Panc1 (cell line): ENCODE measurements at regions of chr6 and their contacts with region 1.

Region 1: DNA sequence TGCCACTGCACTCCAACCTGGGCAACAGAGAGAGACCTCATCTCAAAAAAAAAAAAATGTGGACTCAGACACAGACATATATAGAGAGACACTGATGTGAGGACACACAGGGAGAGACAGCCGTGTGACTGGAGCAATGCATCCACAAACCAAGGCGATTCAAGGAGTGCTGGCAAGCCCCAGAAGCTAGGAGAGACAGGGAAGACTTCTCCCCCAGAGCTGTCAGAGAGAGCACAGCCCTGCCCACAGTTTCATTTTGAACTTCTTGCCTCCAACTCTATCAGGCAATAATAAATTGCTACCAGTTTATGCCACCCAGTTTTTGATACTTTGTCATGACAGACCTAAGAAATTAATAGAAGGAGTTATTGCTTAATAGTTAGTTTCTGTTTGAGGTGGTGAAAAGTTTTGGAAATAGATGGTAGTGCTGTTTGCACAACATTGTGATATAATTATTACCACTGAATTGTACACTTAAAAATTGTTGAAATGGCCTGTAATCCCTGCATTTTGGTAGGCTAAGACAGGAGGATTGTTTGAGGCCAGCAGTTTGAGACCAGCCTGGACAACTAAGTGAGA is 5.1 kb upstream of the MDFI start:
- DNase-seq: no peak
- ATAC-seq: no peak
- H3K4me3 ChIP-seq: no peak overlapping the region
- H3K27ac ChIP-seq: no peak overlapping the region
- H3K4me1 ChIP-seq: no peaks in the 10 kb centered on the region
- H3K27me3 ChIP-seq: no peaks in the 10 kb centered on the region; the same call in none of the 2 replicates
- CTCF ChIP-seq: no peak

Region 2: DNA sequence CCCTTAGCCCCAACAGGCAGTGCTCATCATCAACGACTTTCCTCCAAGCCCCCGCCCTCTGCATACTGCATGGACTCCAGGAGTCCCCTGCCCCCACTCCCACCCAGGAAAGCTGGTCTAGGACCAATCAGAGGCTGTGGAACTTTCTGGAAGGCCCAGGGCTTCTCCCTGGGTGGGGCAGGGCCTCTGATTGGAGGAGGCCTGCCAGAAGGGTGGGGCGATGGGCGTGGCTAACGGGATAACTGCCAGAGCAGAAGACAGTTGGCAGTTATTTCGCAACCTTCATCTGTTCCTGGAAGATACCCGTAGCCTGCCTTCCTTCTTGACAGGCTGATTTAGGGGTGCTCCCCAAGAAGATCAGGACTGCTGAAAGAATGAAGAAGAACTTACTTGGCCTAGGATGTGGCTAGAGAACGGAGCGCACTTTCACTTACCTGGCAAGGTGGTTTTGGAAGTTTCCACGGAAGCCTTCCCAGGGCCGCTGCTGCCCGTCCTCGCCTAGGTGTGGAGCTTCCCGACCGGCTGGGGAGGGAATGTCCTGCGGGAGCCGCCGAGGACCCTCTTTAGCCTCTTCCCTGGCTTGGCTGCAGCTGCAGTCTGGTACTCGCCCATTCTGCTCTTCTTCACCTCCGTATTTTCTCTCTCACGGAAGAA is 1254.9 kb before region 1 on chr6:
- CTCF ChIA-PET with region 1: no interaction called
- POLR2A ChIA-PET with region 1: no interaction called
- in situ Hi-C with region 1: no loop called
- intact Hi-C with region 1: no loop called
- DNase-seq: no peak
- ATAC-seq: no peak
- H3K4me3 ChIP-seq: no peak overlapping the region
- H3K27ac ChIP-seq: no peak overlapping the region
- H3K4me1 ChIP-seq: no peaks in the 10 kb centered on the region
- H3K27me3 ChIP-seq: no peaks in the 10 kb centered on the region
- CTCF ChIP-seq: no peak

Region 3: GRCh38 chr6:41591859-41592502 is 41.2 kb before region 1 on chr6:
- CTCF ChIA-PET with region 1: no interaction called
- POLR2A ChIA-PET with region 1: no interaction called
- in situ Hi-C with region 1: no loop called
- intact Hi-C with region 1: no loop called
- DNase-seq: peak; percentile 46
- ATAC-seq: peak; percentile 82
- H3K4me3 ChIP-seq: no peak overlapping the region
- H3K27ac ChIP-seq: no peak overlapping the region
- H3K4me1 ChIP-seq: no peaks in the 10 kb centered on the region
- H3K27me3 ChIP-seq: no peaks in the 10 kb centered on the region
- CTCF ChIP-seq: peak; percentile 95

Region 4: DNA sequence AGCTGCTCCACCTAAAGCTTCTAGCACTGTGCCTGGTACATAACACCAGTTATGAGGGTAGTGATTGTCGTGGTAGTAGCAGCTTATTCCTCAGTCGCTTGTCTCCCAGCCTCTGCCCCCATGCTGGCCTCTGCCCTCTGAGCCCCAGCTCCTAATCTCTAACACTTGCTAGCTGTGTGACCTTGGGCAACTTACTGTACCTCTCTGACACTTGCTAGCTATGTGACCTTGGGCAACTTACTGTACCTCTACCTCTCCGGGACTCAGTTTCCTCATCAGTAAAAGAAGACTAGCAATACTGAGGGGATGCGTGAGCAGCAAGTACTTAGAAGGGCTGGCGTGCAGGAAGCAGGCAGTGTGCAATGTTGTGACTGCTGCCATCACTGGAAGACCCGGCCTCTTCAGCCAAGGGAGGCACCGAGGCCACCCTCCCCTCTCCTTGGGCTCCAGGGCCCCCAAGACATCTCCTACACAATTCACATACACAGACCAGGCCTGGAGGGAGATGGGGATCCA is 15.0 kb after region 1 on chr6:
- CTCF ChIA-PET with region 1: no interaction called
- POLR2A ChIA-PET with region 1: interaction called, 11 read pairs
- in situ Hi-C with region 1: no loop called
- intact Hi-C with region 1: no loop called
- DNase-seq: no peak
- ATAC-seq: no peak
- H3K4me3 ChIP-seq: no peak overlapping the region
- H3K27ac ChIP-seq: no peak overlapping the region
- H3K4me1 ChIP-seq: peaks cover 3% of the 10 kb centered on the region; the same call in 1 of the 2 replicates
- H3K27me3 ChIP-seq: no peaks in the 10 kb centered on the region
- CTCF ChIP-seq: no peak

Region 5: GRCh38 chr6:41859356-41859755 is 226.2 kb after region 1 on chr6:
- CTCF ChIA-PET with region 1: no interaction called
- POLR2A ChIA-PET with region 1: no interaction called
- in situ Hi-C with region 1: no loop called
- intact Hi-C with region 1: no loop called
- DNase-seq: no peak
- ATAC-seq: no peak
- H3K4me3 ChIP-seq: no peak overlapping the region
- H3K27ac ChIP-seq: no peak overlapping the region
- H3K4me1 ChIP-seq: no peaks in the 10 kb centered on the region
- H3K27me3 ChIP-seq: no peaks in the 10 kb centered on the region
- CTCF ChIP-seq: no peak